Heart right ventricle (tissue), 16 donors: ENCODE measurements at regions of chr9 and their contacts with region 1.

Region 1: DNA sequence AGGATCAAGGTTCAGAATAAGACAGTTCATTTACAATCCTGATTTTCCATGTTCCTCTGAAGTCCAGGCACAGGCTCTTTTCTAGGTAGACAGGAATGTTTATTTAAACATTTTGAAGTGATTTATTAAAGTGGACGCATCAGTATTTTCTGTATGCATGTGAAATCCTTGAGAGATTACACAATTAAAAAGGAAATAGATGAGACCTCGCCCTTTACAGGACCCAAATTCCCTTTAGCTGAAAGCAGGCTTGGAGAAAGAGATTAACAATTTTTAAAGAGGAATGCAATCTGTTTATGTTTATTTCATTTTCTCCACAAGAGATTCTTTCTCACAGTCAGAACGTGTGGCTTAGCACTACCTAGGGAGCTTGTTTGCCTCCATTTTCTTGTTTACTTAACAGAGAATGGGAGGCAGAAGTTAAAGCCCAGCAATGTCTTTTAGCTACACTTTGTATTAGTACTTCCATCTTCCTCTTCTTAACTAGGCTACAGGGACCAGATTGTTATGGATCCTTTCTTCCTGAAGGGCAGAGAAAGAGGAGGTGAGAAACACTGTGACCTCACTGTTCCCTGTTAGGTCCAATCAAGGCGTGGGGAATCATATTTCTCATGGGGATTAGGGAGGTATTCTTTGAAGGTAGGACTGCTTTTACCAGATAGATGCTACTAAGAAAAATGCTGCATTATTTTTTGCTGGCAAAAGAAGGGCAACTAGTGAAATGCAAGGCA is 416.0 kb downstream of the SH3GL2 start:
- DNase-seq: no peak
- ATAC-seq: no peak
- H3K4me3 ChIP-seq: no peak overlapping the region
- H3K27ac ChIP-seq: no peak overlapping the region
- H3K4me1 ChIP-seq: no peaks in the 10 kb centered on the region
- H3K27me3 ChIP-seq: peaks cover 0 to 4% (median 0%) of the 10 kb centered on the region in 7 donors
- CTCF ChIP-seq: no peak

Region 2: GRCh38 chr9:17970277-17970676 is 24.6 kb before region 1 on chr9:
- intact Hi-C with region 1: loop called in 1 of 10 experiments (anchors 2 kb)
- DNase-seq: no peak
- ATAC-seq: no peak
- H3K4me3 ChIP-seq: no peak overlapping the region
- H3K27ac ChIP-seq: no peak overlapping the region
- H3K4me1 ChIP-seq: no peaks in the 10 kb centered on the region
- H3K27me3 ChIP-seq: no peaks in the 10 kb centered on the region
- CTCF ChIP-seq: no peak